ENCODE measurements at regions of chrX and their contacts with region 1.

Region 1: GRCh38 chrX:48737213-48737938 is 24.2 kb upstream of the GLOD5 start:
- DNase-seq: peak; percentile 91 to 95 (median 92)
- ATAC-seq: peak; percentile 99 to 100 (median 99)
- H3K4me3 ChIP-seq: peak overlapping the region; percentile 19 to 89 (median 68)
- H3K27ac ChIP-seq: peak overlapping the region; percentile 76 to 94 (median 88)
- H3K4me1 ChIP-seq: peaks cover 0 to 9% (median 2%) of the 10 kb centered on the region in 12 donors
- H3K27me3 ChIP-seq: no peaks in the 10 kb centered on the region
- CTCF ChIP-seq: no peak
- POLR2A ChIP-seq: peak in 1 of 2 donors; percentile 58

Region 2: DNA sequence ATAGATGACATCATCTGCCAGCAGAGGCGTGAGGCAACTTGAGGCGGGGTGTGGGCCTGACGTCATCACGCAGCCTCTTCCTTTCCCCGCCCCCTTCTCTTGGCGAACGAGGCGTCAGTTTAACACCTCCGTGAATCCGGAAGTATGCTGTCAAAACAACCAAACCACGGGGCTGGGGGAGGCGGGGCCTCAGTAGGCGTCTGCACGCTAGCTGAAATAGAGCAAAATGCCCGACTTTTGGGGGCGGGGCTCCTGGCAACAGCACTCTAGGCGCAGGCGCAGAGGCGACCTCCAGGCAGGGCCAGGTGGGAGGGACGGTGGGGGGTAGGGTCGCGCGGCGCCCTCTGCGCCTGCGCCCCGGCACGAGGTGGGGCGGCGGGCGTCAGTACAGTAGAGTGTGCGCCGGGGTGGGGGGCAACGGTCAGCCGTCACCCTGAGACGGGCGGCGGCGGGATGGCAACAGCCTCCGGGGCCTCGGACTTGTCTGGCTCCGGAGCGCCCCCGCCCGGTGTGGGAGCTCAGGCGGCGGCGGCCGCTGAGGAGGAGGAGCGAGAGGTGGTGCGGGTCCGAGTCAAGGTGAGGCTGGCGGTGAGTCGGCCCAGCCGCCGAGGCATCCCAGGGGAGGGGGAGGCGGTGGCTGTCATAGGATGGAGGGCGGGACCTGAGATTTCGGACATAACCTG is 197.9 kb before region 1 on chrX and contains the start of gene TBC1D25:
- intact Hi-C with region 1: no loop called
- DNase-seq: peak; percentile 95 to 97 (median 96)
- ATAC-seq: peak; percentile 88 to 96 (median 92)
- H3K4me3 ChIP-seq: peak within 1 kb of the TSS; percentile 53 to 91 (median 74)
- H3K27ac ChIP-seq: peak within 1 kb of the TSS; percentile 73 to 95 (median 90)
- H3K4me1 ChIP-seq: peaks cover 0 to 16% (median 3%) of the 10 kb centered on the region in 12 donors
- H3K27me3 ChIP-seq: peaks cover 0 to 6% (median 0%) of the 10 kb centered on the region in 9 donors
- CTCF ChIP-seq: peak in 11 of 12 donors; percentile 6 to 66 (median 45)
- POLR2A ChIP-seq: peak in 1 of 2 donors; percentile 45
- total RNA-seq, gene TBC1D25: 13.4 to 21.6 (median 16.8) TPM

Region 3: DNA sequence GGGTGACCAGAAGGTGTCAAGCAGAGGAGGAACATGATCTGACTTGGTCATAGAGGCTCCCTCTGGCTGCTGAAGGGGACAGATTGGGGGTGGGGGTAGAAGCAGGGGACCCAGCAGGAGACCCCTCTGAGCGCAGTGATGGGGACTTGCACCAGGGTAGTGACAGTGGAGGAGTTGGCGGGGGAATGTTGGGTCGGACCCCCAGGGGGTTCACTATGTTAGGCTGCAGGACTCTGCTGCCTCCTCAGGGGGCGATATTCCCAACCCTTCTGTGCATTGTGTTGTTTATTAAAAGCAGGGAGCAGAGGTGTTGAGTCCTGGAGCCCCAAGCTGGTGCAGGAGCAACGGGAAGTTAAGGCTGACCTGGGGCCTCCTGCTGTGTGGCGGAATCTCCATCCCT is 131.3 kb before region 1 on chrX:
- intact Hi-C with region 1: no loop called
- DNase-seq: no peak
- ATAC-seq: peak in 1 of 4 donors; percentile 10
- H3K4me3 ChIP-seq: no peak overlapping the region
- H3K27ac ChIP-seq: no peak overlapping the region
- H3K4me1 ChIP-seq: no peaks in the 10 kb centered on the region
- H3K27me3 ChIP-seq: no peaks in the 10 kb centered on the region
- CTCF ChIP-seq: peak in 1 of 12 donors; percentile 5
- POLR2A ChIP-seq: no peak

Region 4: DNA sequence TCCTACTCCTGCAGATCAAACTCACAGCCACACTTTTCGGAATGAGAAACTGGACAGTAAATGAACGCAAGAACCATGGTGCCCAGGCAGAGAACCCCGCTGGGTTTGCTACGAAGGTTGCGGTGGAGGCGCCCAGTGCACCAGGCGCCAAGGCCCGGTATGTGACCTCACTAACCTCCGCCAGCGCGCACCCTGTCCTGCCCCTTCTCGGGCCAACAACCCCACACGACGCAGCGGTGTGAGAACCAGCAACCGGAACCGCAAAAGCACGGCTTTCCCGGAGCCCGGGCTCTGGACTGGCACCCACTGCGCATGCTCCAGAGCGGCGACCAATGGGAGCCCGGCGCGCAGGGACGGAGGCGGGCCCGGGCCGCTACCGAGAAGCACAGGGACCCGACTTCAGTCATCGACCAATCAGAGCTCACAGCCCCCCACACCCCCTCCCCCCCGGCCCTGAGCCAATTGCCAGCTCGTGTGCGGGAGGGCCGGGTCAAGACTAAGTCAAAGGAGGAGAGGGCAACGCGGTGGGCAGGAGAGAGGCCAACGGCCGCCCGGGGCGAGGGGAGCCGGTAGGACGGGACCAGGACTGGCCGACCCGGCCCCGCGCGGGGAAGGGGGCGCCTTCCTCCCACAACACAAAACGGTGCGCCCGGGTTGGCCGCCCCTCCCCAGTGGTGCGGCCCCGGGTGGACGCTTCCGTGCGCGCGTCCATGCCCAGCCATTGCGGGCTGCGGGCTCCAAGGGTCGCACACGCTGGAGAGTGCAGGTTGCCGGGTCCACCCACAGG is 61.1 kb before region 1 on chrX:
- intact Hi-C with region 1: loop called in 2 of 10 experiments (anchors 10 kb)
- DNase-seq: peak; percentile 89 to 95 (median 92)
- ATAC-seq: peak; percentile 99 to 100 (median 100)
- H3K4me3 ChIP-seq: peak overlapping the region; percentile 41 to 95 (median 76)
- H3K27ac ChIP-seq: peak overlapping the region; percentile 47 to 93 (median 87)
- H3K4me1 ChIP-seq: peaks cover 0 to 9% (median 0%) of the 10 kb centered on the region in 12 donors
- H3K27me3 ChIP-seq: no peaks in the 10 kb centered on the region
- CTCF ChIP-seq: peak in 1 of 12 donors; percentile 9
- POLR2A ChIP-seq: peak in 1 of 2 donors; percentile 72

Measured in heart left ventricle (tissue), 16 donors.